Ascending aorta (tissue), 2 donors: ENCODE measurements at regions of chr6 and their contacts with region 1.

Region 1: GRCh38 chr6:157021344-157021992 is 244.3 kb downstream of the ARID1B start:
- DNase-seq: peak; percentile 76 to 95
- H3K4me3 ChIP-seq: peak overlapping the region; percentile 85 to 93
- H3K27ac ChIP-seq: peak overlapping the region; percentile 99
- H3K4me1 ChIP-seq: peaks cover 0 to 16% of the 10 kb centered on the region in 2 donors
- H3K27me3 ChIP-seq: no peaks in the 10 kb centered on the region
- CTCF ChIP-seq: peak; percentile 9 to 43 (median 22)

Region 2: GRCh38 chr6:156564127-156564806 is 457.2 kb before region 1 on chr6:
- intact Hi-C with region 1: loop called (anchors 10 kb)
- DNase-seq: peak; percentile 30 to 83
- H3K4me3 ChIP-seq: no peak overlapping the region
- H3K27ac ChIP-seq: no peak overlapping the region
- H3K4me1 ChIP-seq: peaks cover 0 to 4% of the 10 kb centered on the region in 2 donors
- H3K27me3 ChIP-seq: no peaks in the 10 kb centered on the region
- CTCF ChIP-seq: peak; percentile 84 to 96 (median 94)

Region 3: GRCh38 chr6:156828280-156828703 is 193.2 kb before region 1 on chr6:
- intact Hi-C with region 1: loop called (anchors 2 kb)
- DNase-seq: no peak
- H3K4me3 ChIP-seq: no peak overlapping the region
- H3K27ac ChIP-seq: peak overlapping the region; percentile 80 to 91
- H3K4me1 ChIP-seq: peaks cover 2 to 47% of the 10 kb centered on the region in 2 donors
- H3K27me3 ChIP-seq: no peaks in the 10 kb centered on the region
- CTCF ChIP-seq: no peak

Region 4: GRCh38 chr6:156852132-156852857 is 169.2 kb before region 1 on chr6:
- intact Hi-C with region 1: no loop called
- DNase-seq: no peak
- H3K4me3 ChIP-seq: no peak overlapping the region
- H3K27ac ChIP-seq: peak overlapping the region in 1 of 2 donors; percentile 13
- H3K4me1 ChIP-seq: peaks cover 7 to 58% of the 10 kb centered on the region in 2 donors
- H3K27me3 ChIP-seq: no peaks in the 10 kb centered on the region
- CTCF ChIP-seq: no peak

Region 5: GRCh38 chr6:156953479-156954146 is 67.9 kb before region 1 on chr6:
- intact Hi-C with region 1: no loop called
- DNase-seq: no peak
- H3K4me3 ChIP-seq: no peak overlapping the region
- H3K27ac ChIP-seq: no peak overlapping the region
- H3K4me1 ChIP-seq: peaks cover 5 to 32% of the 10 kb centered on the region in 2 donors
- H3K27me3 ChIP-seq: no peaks in the 10 kb centered on the region
- CTCF ChIP-seq: peak in 2 of 3 experiments; percentile 17 to 37

Region 6: DNA sequence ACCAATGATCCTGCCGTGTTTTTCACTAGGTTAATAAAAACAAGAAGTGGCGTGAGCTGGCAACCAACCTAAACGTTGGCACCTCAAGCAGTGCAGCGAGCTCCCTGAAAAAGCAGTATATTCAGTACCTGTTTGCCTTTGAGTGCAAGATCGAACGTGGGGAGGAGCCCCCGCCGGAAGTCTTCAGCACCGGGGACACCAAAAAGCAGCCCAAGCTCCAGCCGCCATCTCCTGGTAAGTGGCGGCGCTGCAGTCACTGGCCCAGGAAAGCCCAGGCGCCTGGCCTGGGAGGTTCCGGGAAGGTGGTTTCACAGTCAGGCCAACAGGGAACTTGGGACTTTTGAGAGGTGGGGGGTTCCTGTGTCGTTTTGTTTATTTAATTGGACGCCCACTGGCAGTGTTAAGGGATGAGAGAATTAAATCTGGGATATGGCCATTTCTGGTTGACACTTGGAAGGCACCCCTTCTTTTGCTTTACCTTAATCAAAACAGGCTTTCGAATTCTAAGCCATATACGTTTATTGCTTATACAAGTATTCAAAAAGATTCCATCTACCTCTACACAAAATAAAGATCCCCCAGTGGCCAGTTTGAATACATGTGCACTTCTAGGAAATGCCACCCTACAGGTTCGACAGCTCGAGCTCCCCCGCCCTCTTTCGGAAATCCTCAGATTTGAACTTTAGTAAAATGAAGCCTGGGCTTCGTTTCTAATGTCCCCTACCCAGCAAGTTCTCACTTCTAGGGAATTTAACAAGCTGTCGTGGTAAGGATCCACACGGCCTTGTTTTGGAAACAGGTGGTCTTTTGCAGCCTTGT is 162.9 kb after region 1 on chr6:
- intact Hi-C with region 1: loop called (anchors 5 kb)
- DNase-seq: peak in 1 of 2 donors; percentile 89
- H3K4me3 ChIP-seq: peak overlapping the region; percentile 7 to 30
- H3K27ac ChIP-seq: peak overlapping the region in 1 of 2 donors; percentile 35
- H3K4me1 ChIP-seq: peaks cover 0 to 20% of the 10 kb centered on the region in 2 donors
- H3K27me3 ChIP-seq: no peaks in the 10 kb centered on the region
- CTCF ChIP-seq: peak; percentile 89 to 99 (median 96)

Region 7: GRCh38 chr6:157274471-157275226 is 253.2 kb after region 1 on chr6:
- intact Hi-C with region 1: loop called (anchors 5 kb)
- DNase-seq: peak; percentile 53 to 91
- H3K4me3 ChIP-seq: peak overlapping the region; percentile 75 to 86
- H3K27ac ChIP-seq: peak overlapping the region; percentile 97 to 98
- H3K4me1 ChIP-seq: peaks cover under 1 to 24% of the 10 kb centered on the region in 2 donors
- H3K27me3 ChIP-seq: no peaks in the 10 kb centered on the region
- CTCF ChIP-seq: peak in 2 of 3 experiments; percentile 49 to 99